Calu3 (cell line): ENCODE measurements at regions of chr22 and their contacts with region 1.

Region 1: DNA sequence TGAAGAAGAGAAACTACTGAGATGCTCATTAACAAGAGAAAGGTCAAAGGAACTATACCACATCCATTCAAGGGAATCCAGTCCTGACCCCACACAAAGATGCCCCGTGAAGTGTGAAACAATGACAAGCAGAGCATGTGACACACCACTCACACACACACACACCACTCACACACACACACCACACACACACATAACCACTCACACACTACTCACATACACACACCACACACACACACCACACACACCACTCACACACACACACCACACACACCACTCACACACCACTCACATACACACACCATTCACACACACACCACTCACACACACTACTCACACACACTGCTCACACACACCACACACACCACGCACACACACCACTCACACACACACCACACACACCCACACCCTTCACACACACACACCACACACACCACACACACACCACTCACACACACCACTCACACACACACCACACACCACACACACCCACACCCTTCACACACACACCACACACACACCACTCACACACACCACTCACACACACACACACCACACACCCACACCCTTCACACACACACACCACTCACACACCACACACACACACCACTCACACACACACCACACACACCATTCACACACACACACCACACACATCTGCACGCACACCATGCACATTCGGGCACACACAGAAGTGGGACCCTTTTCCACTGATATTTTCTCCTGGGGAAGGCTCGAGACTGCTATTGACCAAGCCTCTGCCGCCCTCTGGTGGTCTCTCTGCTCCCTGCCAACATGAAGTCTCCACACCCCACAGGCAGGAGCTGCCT is 32.0 kb upstream of the COMT start:
- DNase-seq: peak; percentile 84
- H3K4me3 Mint-ChIP-seq: no peak overlapping the region
- H3K27ac Mint-ChIP-seq: no peak overlapping the region
- H3K4me1 Mint-ChIP-seq: peaks cover 5% of the 10 kb centered on the region
- H3K27me3 Mint-ChIP-seq: no peaks in the 10 kb centered on the region
- CTCF ChIP-seq: peak; percentile 94

Region 2: DNA sequence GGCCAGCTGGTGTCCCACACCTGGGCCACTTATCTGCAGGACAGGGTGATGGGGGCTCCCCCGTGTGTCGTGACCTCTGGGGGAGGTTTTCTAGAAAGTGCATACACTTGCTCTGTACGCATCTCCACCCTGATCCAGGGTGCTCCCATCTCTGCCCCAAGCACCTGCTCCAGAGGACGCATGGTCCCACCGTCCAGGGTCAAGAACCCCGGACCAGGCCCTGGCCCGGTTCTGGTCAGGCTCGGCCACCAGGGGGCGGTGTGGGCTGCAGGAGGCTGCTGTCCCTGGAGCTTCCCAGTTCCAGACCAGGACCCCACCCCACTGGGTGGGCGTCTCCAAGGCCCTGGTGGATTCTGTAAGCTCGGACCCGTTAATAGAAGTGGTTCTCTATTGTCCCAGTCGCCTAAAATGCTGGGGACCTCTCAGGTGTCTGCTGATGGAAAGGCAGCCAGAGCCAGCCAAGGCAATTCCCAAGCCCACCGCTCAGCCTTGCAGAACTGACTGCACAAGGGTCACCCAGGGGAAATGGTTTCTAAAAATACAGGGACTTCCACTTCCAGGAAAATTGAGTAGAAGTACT is 230.0 kb before region 1 on chr22:
- CTCF ChIA-PET with region 1: interaction called, 10 read pairs
- intact Hi-C with region 1: no loop called
- DNase-seq: peak; percentile 53
- H3K4me3 Mint-ChIP-seq: no peak overlapping the region
- H3K27ac Mint-ChIP-seq: no peak overlapping the region
- H3K4me1 Mint-ChIP-seq: peaks cover 8% of the 10 kb centered on the region
- H3K27me3 Mint-ChIP-seq: peaks cover 45% of the 10 kb centered on the region
- CTCF ChIP-seq: peak; percentile 89

Region 3: GRCh38 chr22:19730655-19731360 is 178.8 kb before region 1 on chr22:
- CTCF ChIA-PET with region 1: interaction called, 73 read pairs
- intact Hi-C with region 1: loop called (anchors 1 kb)
- DNase-seq: peak; percentile 89
- H3K4me3 Mint-ChIP-seq: peak overlapping the region; percentile 83
- H3K27ac Mint-ChIP-seq: no peak overlapping the region
- H3K4me1 Mint-ChIP-seq: no peaks in the 10 kb centered on the region
- H3K27me3 Mint-ChIP-seq: peaks cover 79% of the 10 kb centered on the region
- CTCF ChIP-seq: peak; percentile 96

Region 4: DNA sequence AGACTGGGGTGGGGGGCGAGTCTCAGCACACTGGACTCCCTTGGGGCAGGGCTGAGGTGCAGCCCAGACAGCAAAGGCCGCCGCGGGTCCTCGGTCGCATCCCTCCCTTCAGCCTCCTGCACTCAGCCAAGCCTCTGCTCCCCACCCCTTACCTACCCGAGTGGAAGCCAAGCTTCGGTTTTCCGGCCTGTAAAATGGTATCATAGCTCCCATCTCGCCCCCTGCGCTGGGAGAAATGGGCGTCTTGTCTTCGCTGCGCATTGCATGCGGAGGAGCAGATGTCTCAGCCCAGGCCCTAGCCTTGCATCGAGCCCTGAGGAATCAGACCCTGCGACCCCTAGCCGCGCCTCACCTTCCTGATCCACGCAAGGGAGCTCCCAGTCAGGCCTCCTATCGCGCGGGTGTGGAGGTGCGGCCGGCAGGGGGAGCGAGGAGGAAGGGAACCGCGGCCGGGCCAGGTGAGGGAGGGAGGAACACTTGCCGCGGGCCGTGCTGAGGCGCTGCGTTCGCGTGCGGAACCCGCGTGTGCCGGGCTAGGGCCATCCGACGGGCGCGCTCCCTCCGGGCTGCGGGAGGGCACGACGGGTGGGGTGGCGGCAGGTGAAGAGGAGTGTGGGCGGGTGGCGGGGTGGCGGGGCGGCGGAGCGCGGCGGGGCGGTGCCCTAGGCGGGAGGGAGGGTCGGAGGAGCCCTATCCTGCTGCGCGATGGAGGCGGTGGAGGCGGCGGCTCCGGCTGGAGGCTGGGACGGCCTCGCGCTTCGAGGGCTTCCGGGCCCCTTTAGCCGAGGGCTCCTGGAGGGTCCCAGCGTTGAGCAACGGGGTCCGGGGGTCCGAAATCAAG is 153.1 kb before region 1 on chr22:
- CTCF ChIA-PET with region 1: interaction called, 11 read pairs
- intact Hi-C with region 1: no loop called
- DNase-seq: peak; percentile 82
- H3K4me3 Mint-ChIP-seq: peak overlapping the region; percentile 54
- H3K27ac Mint-ChIP-seq: no peak overlapping the region
- H3K4me1 Mint-ChIP-seq: peaks cover 13% of the 10 kb centered on the region
- H3K27me3 Mint-ChIP-seq: peaks cover 92% of the 10 kb centered on the region
- CTCF ChIP-seq: peak; percentile 75

Region 5: DNA sequence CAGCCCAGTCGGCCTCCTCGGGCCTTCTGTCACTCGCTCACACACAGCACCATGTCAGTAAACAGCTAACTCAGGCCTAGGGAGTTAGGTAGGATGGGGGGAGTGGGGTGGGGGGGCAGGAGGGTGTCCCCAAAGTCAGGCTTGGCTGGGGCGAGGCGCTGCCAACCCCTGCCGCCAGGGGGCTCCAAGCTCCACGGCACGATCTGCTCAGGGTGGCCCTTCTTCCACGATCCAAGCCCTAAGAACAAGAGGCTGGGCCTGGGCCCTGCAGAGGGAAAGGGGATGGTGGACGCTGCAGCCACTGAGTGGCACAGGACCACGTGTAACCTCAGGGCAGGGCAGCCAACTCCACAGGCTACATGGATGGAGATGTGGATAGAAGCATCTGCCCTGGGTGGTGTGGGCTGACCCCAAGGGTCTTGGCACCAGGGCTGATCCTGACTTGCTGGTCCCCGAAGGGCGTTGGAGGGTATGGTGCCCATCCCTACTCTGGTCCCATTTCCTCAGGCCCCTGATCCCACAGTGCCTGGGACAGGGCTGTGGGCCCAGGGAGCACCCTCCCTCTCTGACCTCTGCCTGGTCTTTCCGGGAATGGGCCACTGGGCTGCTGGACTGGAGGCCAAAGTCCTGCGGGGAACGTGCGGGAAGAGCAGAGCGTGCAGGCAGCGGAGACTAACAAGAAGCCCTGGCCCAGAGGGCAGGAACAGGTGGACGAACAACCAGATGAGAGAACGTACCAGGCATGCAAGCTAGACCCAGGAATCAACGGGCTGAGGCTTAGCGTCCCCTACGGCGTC is 61.1 kb after region 1 on chr22:
- CTCF ChIA-PET with region 1: no interaction called
- intact Hi-C with region 1: no loop called
- DNase-seq: peak; percentile 81
- H3K4me3 Mint-ChIP-seq: no peak overlapping the region
- H3K27ac Mint-ChIP-seq: no peak overlapping the region
- H3K4me1 Mint-ChIP-seq: peaks cover 19% of the 10 kb centered on the region
- H3K27me3 Mint-ChIP-seq: no peaks in the 10 kb centered on the region
- CTCF ChIP-seq: peak; percentile 98